Naive thymus-derived CD4-positive, alpha-beta T cell (primary cell): ENCODE measurements at regions of chr18 and their contacts with region 1.

Region 1: GRCh38 chr18:63311118-63312018 is 8.2 kb downstream of the BCL2 start:
- DNase-seq: no peak
- ATAC-seq: peak; percentile 30
- H3K4me3 ChIP-seq: no peak overlapping the region
- H3K4me3 Mint-ChIP-seq: peak overlapping the region in 8 of 10 donors; percentile 18 to 99 (median 45)
- H3K27ac ChIP-seq: peak overlapping the region; percentile 94
- H3K27ac Mint-ChIP-seq: peak overlapping the region in 7 of 9 donors; percentile 26 to 98 (median 90)
- H3K4me1 ChIP-seq: peaks cover 29 to 44% of the 10 kb centered on the region in 2 donors
- H3K4me1 Mint-ChIP-seq: peaks cover 59 to 94% (median 90%) of the 10 kb centered on the region in 7 donors
- H3K27me3 ChIP-seq: no peaks in the 10 kb centered on the region
- H3K27me3 Mint-ChIP-seq: no peaks in the 10 kb centered on the region

Region 2: DNA sequence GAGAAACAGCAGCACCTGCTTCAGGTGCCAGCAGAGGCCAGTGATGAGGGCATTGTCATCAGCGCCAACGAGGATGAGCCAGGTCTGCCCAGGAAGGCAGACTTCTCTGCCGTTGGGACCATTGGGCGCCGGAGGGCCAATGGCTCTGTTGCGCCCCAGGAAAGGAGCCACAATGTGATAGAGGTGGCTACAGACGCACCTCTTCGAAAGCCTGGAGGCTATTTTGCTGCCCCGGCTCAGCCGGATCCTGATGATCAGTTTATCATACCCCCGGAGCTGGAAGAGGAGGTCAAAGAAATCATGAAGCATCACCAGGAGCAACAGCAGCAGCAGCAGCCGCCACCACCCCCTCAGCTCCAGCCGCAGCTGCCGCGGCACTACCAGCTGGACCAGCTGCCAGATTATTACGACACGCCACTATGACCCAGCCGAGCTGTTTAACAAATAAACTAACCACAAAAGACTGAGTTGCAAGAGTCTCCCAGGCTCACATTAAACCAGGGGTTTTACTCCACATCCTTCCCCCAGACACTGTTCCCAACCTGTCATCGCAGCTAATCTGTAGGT is 332.3 kb before region 1 on chr18:
- CTCF ChIA-PET with region 1: no interaction called
- POLR2A ChIA-PET with region 1: no interaction called
- intact Hi-C with region 1: no loop called
- DNase-seq: no peak
- ATAC-seq: peak; percentile 54
- H3K4me3 ChIP-seq: no peak overlapping the region
- H3K4me3 Mint-ChIP-seq: no peak overlapping the region
- H3K27ac ChIP-seq: no peak overlapping the region
- H3K27ac Mint-ChIP-seq: peak overlapping the region in 1 of 9 donors; percentile 19
- H3K4me1 ChIP-seq: no peaks in the 10 kb centered on the region
- H3K4me1 Mint-ChIP-seq: peaks cover 0 to 7% (median 5%) of the 10 kb centered on the region in 7 donors
- H3K27me3 ChIP-seq: no peaks in the 10 kb centered on the region
- H3K27me3 Mint-ChIP-seq: no peaks in the 10 kb centered on the region

Region 3: DNA sequence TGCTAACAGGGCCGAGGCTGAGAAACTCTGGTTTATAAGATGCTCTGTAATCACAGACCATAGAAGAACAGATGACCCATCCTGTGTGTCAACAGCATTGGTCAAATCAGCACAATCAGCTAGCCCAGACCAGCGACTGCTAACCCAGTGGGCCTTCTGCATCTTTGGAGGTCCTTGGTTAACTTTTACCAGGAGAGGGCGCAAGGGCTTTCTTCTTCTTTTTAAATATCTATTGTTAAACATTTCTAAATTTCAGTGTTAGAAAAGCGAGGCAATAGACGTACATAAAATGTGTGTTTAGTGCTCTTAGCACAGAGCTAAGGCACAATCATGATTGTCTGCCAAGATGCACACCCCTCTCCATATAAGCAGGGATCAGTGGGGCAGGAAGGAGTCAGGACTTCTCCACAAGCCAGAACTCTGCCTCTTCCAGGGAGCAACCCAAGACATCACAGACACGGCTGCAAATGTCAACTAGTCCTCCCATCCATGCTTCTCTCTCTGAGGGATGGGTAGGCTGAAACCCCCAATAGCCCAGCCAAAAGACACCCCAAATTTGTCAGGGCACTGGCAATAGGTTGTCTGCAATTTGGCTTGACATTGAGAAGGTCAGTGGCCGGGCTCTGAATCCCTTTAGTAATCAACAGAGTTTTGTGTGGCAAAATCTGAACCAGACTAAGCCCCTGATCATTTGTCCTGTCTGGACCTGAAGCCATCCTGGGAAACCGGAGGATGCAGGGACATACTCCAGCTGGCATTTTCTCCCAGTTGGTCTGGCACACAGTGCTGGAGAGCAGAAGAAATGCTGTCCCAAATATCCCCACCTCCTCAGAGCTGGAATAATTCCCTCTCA is 180.0 kb before region 1 on chr18:
- CTCF ChIA-PET with region 1: interaction called, 13 read pairs
- POLR2A ChIA-PET with region 1: interaction called, 3 read pairs
- intact Hi-C with region 1: no loop called
- DNase-seq: peak in 7 of 9 donors; percentile 51 to 71 (median 69)
- ATAC-seq: peak; percentile 80
- H3K4me3 ChIP-seq: no peak overlapping the region
- H3K4me3 Mint-ChIP-seq: peak overlapping the region in 9 of 10 donors; percentile 13 to 81 (median 45)
- H3K27ac ChIP-seq: peak overlapping the region; percentile 61
- H3K27ac Mint-ChIP-seq: peak overlapping the region in 8 of 9 donors; percentile 36 to 94 (median 83)
- H3K4me1 ChIP-seq: peaks cover 9 to 18% of the 10 kb centered on the region in 2 donors
- H3K4me1 Mint-ChIP-seq: peaks cover 28 to 58% (median 50%) of the 10 kb centered on the region in 7 donors
- H3K27me3 ChIP-seq: no peaks in the 10 kb centered on the region
- H3K27me3 Mint-ChIP-seq: no peaks in the 10 kb centered on the region

Region 4: GRCh38 chr18:63299837-63300745 is 11.3 kb before region 1 on chr18:
- CTCF ChIA-PET with region 1: interaction called, 11 read pairs
- POLR2A ChIA-PET with region 1: interaction called, 18 read pairs
- intact Hi-C with region 1: loop called (anchors 1 kb)
- DNase-seq: peak in 1 of 9 donors; percentile 36
- ATAC-seq: peak; percentile 52
- H3K4me3 ChIP-seq: no peak overlapping the region
- H3K4me3 Mint-ChIP-seq: peak overlapping the region; percentile 25 to 78 (median 63)
- H3K27ac ChIP-seq: peak overlapping the region; percentile 57
- H3K27ac Mint-ChIP-seq: peak overlapping the region; percentile 55 to 95 (median 89)
- H3K4me1 ChIP-seq: peaks cover 59 to 68% of the 10 kb centered on the region in 2 donors
- H3K4me1 Mint-ChIP-seq: peaks cover 58 to 87% (median 86%) of the 10 kb centered on the region in 7 donors
- H3K27me3 ChIP-seq: no peaks in the 10 kb centered on the region
- H3K27me3 Mint-ChIP-seq: no peaks in the 10 kb centered on the region